Panc1 (cell line): ENCODE measurements at regions of chr15 and their contacts with region 1.

Region 1: GRCh38 chr15:50562735-50563640 is 16.5 kb upstream of the USP50 start:
- DNase-seq: no peak
- ATAC-seq: no peak
- H3K4me3 ChIP-seq: no peak overlapping the region
- H3K27ac ChIP-seq: no peak overlapping the region
- H3K4me1 ChIP-seq: no peaks in the 10 kb centered on the region
- H3K27me3 ChIP-seq: no peaks in the 10 kb centered on the region
- CTCF ChIP-seq: no peak

Region 2: DNA sequence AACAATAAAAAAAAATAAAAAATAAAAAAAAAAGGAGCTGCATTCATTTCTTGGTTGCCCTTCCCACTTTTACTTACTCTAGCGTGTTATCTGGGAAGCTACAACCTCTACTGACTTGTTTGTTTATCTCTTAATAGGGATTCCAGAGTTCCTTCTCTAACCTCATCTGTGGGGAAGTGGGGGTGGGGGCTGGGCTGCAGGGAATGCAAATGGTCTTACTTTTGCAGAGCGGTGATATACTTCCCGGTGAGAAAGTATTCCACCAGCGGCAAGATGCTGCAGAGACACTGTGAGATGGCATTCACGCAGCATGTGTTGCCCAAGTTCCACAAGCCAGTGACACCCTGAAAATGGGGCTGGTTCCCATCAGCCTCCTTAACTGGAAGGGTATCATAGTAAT is 18.6 kb before region 1 on chr15:
- CTCF ChIA-PET with region 1: no interaction called
- POLR2A ChIA-PET with region 1: interaction called, 13 read pairs
- in situ Hi-C with region 1: no loop called
- intact Hi-C with region 1: no loop called
- DNase-seq: no peak
- ATAC-seq: no peak
- H3K4me3 ChIP-seq: no peak overlapping the region
- H3K27ac ChIP-seq: no peak overlapping the region
- H3K4me1 ChIP-seq: no peaks in the 10 kb centered on the region
- H3K27me3 ChIP-seq: peaks cover 4% of the 10 kb centered on the region
- CTCF ChIP-seq: no peak

Region 3: GRCh38 chr15:50774450-50774849 is 211.5 kb after region 1 on chr15:
- CTCF ChIA-PET with region 1: no interaction called
- POLR2A ChIA-PET with region 1: no interaction called
- in situ Hi-C with region 1: no loop called
- intact Hi-C with region 1: no loop called
- DNase-seq: no peak
- ATAC-seq: no peak
- H3K4me3 ChIP-seq: no peak overlapping the region
- H3K27ac ChIP-seq: no peak overlapping the region
- H3K4me1 ChIP-seq: no peaks in the 10 kb centered on the region
- H3K27me3 ChIP-seq: no peaks in the 10 kb centered on the region
- CTCF ChIP-seq: no peak